Right ventricle myocardium superior (tissue), 1 donor: ENCODE measurements at regions of chr14 and their contacts with region 1.

Region 1: GRCh38 chr14:38989922-38990546 is 113.0 kb downstream of the SEC23A start:
- DNase-seq: no peak
- ATAC-seq: no peak

Region 2: DNA sequence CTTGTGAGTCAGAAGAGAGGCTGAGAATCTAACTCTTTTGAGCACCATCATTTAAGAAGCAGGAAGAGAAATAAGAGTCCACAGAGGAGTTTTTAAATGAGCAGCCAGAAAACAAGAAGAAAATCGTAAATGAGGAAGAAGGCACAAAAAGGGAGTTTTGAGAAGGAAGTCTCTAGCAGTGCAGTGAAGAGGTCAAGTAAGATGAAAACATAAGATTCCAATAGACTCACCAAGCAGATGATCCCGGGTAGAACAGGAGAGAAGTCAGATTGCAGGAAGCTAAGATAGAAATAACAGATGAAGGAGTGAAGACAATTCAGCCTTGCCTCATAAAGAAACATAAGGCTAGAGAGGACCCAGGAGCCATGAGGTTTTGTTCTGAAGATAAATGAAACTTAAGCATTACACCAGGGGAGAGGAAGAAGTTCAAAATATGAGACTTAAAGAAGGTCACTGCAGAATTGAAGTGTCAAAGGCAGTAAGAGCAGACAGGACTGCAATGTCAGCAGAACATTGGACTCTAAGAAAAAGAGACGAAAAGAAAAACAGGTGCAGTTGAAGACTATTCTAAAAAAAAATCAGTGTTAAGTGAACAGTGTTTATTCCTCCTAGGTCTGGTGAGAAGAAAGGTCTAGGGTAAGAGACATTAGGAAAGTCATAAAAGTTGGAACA is 116.0 kb before region 1 on chr14:
- intact Hi-C with region 1: loop called (anchors 10 kb)
- DNase-seq: no peak
- ATAC-seq: peak; percentile 45

Region 3: DNA sequence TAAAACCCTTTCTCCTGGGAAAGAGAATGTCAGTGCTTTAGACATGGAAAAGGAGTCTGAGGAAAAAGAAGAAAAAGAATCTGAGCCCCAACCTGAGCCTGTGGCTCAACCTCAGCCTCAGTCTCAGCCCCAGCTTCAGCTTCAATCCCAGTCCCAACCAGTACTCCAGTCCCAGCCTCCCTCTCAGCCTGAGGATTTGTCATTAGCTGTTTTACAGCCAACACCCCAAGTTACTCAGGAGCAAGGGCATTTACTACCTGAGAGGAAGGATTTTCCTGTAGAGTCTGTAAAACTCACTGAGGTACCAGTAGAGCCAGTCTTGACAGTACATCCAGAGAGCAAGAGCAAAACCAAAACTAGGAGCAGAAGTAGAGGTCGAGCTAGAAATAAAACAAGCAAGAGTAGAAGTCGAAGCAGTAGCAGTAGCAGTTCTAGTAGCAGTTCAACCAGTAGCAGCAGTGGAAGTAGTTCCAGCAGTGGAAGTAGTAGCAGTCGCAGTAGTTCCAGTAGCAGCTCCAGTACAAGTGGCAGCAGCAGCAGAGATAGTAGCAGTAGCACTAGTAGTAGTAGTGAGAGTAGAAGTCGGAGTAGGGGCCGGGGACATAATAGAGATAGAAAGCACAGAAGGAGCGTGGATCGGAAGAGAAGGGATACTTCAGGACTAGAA is 191.1 kb after region 1 on chr14:
- intact Hi-C with region 1: no loop called
- DNase-seq: no peak
- ATAC-seq: no peak